Activated CD4-positive, alpha-beta T cell treated with anti-CD3 and anti-CD28 coated beads, Interleukin-2, amount 10 ng/mL, durations not matched to agents 24 days and 14 days (primary cell): ENCODE measurements at regions of chr2 and their contacts with region 1.

Region 1: DNA sequence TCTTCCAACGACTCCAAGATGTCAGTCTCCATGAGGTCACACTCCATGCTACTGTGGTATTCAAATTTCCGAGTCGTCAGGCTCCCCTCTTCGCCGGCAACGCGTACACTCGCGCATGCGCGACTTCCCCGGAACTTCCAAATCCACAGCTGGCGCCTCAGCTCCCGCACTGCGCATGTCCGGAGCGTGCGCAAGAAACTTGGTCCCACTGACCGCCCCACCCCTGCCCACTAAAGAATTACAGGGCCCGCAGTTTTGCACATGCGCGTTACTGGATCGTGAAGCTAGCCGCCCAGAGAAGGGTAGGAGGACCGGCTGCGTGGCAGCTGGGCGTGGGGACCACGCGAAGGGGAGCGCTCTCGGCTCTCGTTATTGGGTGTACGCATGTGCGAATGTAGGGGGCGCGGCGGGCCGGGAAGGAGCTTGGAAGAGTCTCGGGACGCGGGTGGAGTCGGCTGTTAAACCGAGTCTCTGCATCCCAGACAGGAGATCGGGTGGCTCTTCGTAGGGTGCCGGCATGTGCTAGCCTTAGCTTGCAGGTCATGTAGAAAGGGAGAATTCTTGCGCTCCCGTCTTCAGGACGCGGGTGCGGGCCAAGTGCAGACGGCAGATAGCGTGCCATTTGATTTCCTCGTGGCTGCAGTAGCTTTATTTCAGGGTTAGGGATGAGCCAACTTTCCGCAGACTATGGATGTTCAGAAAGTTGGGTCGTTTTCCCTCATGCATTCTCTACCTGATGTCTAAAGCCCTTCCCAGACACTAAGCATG is at the start of gene FAM98A:
- DNase-seq: peak; percentile 100
- H3K4me3 Mint-ChIP-seq: peak within 1 kb of the TSS; percentile 98
- H3K27ac Mint-ChIP-seq: peak within 1 kb of the TSS; percentile 99
- H3K4me1 Mint-ChIP-seq: peaks cover 30% of the 10 kb centered on the region
- H3K27me3 Mint-ChIP-seq: peaks cover 2% of the 10 kb centered on the region
- total RNA-seq, gene FAM98A: 72.9 and 79.2 TPM in 2 replicates

Region 2: DNA sequence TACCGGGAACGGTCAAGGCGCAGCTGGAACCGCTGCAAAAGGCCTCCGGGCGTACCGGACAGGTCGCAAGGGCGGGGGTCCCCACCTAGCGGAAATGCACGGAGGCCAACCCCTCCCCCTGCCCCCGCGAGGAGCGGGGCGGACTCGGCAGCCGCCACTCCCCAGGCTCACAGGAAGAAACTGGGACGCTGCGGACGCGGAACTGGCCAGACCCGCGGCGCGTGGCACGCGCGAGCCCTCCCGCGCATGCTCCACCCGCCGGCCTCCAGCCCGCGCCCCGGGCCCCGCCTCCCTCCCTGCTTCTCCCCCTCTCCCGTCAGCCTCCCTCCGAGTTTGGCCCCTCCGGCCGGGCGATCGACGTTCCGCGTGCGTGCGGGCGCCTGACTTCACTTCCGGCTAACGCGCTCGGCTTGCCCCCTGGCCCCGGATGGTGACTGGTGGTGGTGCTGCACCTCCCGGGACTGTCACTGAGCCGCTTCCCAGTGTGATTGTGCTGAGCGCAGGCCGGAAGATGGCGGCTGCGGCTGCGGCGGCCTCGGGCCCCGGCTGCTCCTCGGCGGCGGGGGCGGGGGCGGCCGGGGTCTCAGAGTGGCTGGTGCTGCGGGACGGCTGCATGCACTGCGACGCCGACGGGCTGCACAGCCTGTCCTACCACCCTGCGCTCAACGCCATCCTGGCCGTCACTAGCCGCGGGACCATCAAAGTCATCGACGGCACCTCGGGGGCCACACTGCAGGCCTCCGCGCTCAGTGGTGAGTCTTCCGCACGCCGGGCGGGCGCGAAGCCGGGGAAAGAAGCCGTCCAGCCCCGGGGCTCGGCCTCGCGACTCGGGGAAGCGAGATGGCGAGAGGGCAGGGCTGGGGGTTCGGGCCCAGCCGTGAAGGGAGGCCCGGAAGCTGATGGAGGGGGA is 1242.4 kb before region 1 on chr2 and contains the start of gene BIRC6:
- intact Hi-C with region 1: loop called (anchors 5 kb)
- DNase-seq: peak; percentile 98
- H3K4me3 Mint-ChIP-seq: peak within 1 kb of the TSS; percentile 92
- H3K27ac Mint-ChIP-seq: peak within 1 kb of the TSS; percentile 96
- H3K4me1 Mint-ChIP-seq: peaks cover 31% of the 10 kb centered on the region
- H3K27me3 Mint-ChIP-seq: no peaks in the 10 kb centered on the region
- total RNA-seq, gene BIRC6: 101 and 105 TPM in 2 replicates

Region 3: GRCh38 chr2:32946314-32947075 is 652.9 kb before region 1 on chr2 and contains the start of gene LTBP1:
- intact Hi-C with region 1: loop called (anchors 2 kb)
- DNase-seq: peak; percentile 92
- H3K4me3 Mint-ChIP-seq: peak within 1 kb of the TSS; percentile 83
- H3K27ac Mint-ChIP-seq: no peak within 1 kb of the TSS
- H3K4me1 Mint-ChIP-seq: peaks cover 2% of the 10 kb centered on the region
- H3K27me3 Mint-ChIP-seq: peaks cover 29% of the 10 kb centered on the region
- total RNA-seq, gene LTBP1: 0.14 and 0.21 TPM in 2 replicates

Region 4: DNA sequence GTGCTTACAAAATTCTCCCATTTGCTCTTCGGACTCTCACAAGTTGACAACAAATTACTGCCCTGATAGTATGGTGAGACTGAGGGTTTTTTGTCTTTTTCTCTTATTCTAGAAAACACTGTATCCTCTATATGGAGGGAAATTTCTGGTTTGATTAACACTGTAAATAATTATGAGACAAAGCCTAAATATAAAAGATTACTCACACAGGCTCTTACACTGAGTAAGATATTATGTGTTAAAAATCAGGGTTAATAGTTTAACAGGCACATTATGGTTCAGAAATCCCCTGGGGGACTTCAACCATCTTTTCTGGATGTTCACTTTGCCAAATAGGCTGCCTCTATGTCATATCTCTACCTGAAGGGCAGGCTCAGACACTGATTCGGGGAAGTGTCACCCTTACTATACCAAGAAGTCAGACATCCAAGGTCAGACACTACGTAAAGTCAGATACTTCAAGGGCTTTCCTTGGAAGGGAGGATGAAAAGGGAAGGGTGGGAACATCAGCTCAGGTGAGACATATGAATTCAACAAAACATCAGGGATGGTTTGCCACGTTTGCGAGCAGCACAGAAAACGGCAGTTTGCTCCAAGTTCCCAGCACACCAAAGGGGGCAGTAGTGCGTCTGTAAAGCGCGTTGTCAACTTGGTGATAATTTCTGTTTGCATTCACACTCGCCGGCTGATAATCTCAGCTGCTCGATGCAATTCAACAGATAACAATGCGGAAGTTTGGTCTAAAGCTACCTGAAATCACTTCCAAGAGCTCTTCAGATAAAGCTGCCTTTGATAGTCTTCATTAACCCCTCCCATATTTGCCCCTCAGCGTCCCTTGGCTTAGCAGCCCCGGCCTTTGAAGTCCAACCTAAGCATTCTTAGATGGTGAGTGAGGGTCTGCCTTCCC is 123.9 kb before region 1 on chr2:
- intact Hi-C with region 1: loop called (anchors 1 kb)
- DNase-seq: peak; percentile 95
- H3K4me3 Mint-ChIP-seq: peak overlapping the region; percentile 93
- H3K27ac Mint-ChIP-seq: peak overlapping the region; percentile 99
- H3K4me1 Mint-ChIP-seq: peaks cover 28% of the 10 kb centered on the region
- H3K27me3 Mint-ChIP-seq: peaks cover 6% of the 10 kb centered on the region

Region 5: GRCh38 chr2:33497221-33497650 is 102.1 kb before region 1 on chr2:
- intact Hi-C with region 1: loop called (anchors 5 kb)
- DNase-seq: peak; percentile 65
- H3K4me3 Mint-ChIP-seq: no peak overlapping the region
- H3K27ac Mint-ChIP-seq: no peak overlapping the region
- H3K4me1 Mint-ChIP-seq: peaks cover 35% of the 10 kb centered on the region
- H3K27me3 Mint-ChIP-seq: no peaks in the 10 kb centered on the region

Region 6: GRCh38 chr2:33666628-33667254 is 67.4 kb after region 1 on chr2:
- intact Hi-C with region 1: no loop called
- DNase-seq: no peak
- H3K4me3 Mint-ChIP-seq: no peak overlapping the region
- H3K27ac Mint-ChIP-seq: no peak overlapping the region
- H3K4me1 Mint-ChIP-seq: no peaks in the 10 kb centered on the region
- H3K27me3 Mint-ChIP-seq: no peaks in the 10 kb centered on the region